Activated naive CD4-positive, alpha-beta T cell treated with anti-CD3 and anti-CD28 coated beads for 36 hours (primary cell): ENCODE measurements at regions of chr12 and their contacts with region 1.

Region 1: DNA sequence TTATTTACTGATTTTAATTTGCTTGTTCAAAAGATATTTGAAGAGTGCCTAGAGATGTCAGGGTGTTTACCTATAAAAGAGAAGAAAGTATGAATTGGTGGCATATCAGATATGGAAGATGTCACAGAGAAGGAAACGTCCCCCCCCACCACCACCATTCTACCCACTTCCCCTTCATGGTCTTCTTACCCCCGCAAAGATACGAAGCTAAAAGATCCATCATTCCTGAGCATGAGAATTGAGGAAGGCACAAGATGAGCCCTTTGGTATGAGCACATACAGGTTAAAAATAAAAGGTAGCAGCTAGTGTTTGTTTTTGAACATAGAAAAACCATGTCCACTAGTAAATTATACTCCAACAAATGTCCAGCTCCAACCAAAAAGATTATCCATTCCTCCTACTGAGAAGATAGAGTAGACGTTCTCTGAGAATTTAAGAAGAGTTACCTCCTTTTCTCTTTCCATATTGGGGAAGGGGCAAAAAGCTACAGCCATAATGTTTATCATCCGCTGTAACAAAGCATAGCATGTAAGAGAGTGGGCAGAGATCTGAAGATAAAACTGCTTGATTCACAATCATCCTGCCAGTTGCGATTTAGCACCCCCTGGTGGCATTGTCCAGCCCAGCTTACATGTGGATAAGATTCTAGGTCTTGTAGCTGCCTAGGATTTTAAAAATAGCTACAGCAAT is 29.1 kb downstream of the NFYB start:
- DNase-seq: peak; percentile 96
- H3K4me3 Mint-ChIP-seq: no peak overlapping the region
- H3K27ac Mint-ChIP-seq: no peak overlapping the region
- H3K4me1 Mint-ChIP-seq: peaks cover 7% of the 10 kb centered on the region
- H3K27me3 Mint-ChIP-seq: no peaks in the 10 kb centered on the region

Region 2: DNA sequence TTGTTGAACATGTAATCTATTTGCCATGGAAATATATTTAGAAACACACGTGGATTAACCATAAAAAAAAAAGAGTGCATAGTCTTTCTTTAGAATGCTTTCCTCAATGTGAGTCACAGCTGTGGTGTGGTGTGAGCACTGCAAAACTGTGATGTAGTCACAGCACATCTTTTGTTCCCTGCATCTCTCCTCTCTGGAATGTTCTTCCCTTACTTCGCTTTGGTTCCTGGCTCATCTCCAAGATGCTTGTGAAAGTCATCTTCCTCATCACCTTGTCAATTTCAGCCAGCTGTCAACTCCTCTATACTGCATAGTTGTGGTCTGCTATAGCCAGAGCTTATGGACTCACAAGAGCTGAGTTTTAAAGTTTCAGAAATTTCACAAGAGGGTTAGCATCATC is 461.6 kb before region 1 on chr12:
- CTCF ChIA-PET with region 1: no interaction called
- intact Hi-C with region 1: no loop called
- DNase-seq: no peak
- H3K4me3 Mint-ChIP-seq: no peak overlapping the region
- H3K27ac Mint-ChIP-seq: no peak overlapping the region
- H3K4me1 Mint-ChIP-seq: no peaks in the 10 kb centered on the region
- H3K27me3 Mint-ChIP-seq: peaks cover 4% of the 10 kb centered on the region

Region 3: GRCh38 chr12:103884316-103884715 is 224.6 kb before region 1 on chr12:
- CTCF ChIA-PET with region 1: interaction called, 33 read pairs
- intact Hi-C with region 1: loop called (anchors 1 kb)
- DNase-seq: peak; percentile 75
- H3K4me3 Mint-ChIP-seq: no peak overlapping the region
- H3K27ac Mint-ChIP-seq: no peak overlapping the region
- H3K4me1 Mint-ChIP-seq: peaks cover 22% of the 10 kb centered on the region
- H3K27me3 Mint-ChIP-seq: no peaks in the 10 kb centered on the region

Region 4: DNA sequence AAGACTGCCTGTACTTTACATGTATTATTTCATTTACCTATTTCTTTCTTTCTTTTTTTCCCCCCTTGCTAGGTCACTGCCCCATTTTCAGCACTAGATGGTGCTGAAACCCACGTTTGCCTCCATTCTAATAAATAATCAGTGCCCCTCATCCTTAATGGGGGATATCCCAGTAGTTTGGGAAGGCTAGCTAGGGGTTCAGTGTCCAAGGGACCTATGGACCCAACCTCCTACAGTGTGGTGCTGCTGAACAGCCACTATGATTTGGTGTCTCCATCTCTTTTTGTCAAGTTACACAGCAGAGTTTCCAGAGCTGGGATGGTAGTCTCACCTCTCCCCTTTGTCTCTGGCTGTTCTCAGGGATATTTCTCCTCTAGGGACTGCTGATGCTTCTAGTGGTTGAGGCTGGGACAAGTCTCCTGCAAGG is 51.1 kb before region 1 on chr12:
- CTCF ChIA-PET with region 1: interaction called, 106 read pairs
- intact Hi-C with region 1: loop called (anchors 1 kb)
- DNase-seq: peak; percentile 18
- H3K4me3 Mint-ChIP-seq: no peak overlapping the region
- H3K27ac Mint-ChIP-seq: no peak overlapping the region
- H3K4me1 Mint-ChIP-seq: no peaks in the 10 kb centered on the region
- H3K27me3 Mint-ChIP-seq: peaks cover 40% of the 10 kb centered on the region

Region 5: GRCh38 chr12:104083769-104084475 is 25.0 kb before region 1 on chr12:
- CTCF ChIA-PET with region 1: interaction called, 10 read pairs
- intact Hi-C with region 1: no loop called
- DNase-seq: peak; percentile 61
- H3K4me3 Mint-ChIP-seq: no peak overlapping the region
- H3K27ac Mint-ChIP-seq: no peak overlapping the region
- H3K4me1 Mint-ChIP-seq: peaks cover 15% of the 10 kb centered on the region
- H3K27me3 Mint-ChIP-seq: no peaks in the 10 kb centered on the region